ENCODE measurements at regions of chr9 and their contacts with region 1.

Region 1: GRCh38 chr9:129131300-129132145 is 20.3 kb downstream of the PTPA start:
- DNase-seq: no peak
- H3K4me3 ChIP-seq: no peak overlapping the region
- H3K27me3 ChIP-seq: no peaks in the 10 kb centered on the region
- CTCF ChIP-seq: peak; percentile 99

Region 2: GRCh38 chr9:128863647-128864046 is 267.9 kb before region 1 on chr9:
- CTCF ChIA-PET with region 1: no interaction called
- POLR2A ChIA-PET with region 1: no interaction called
- DNase-seq: no peak
- H3K4me3 ChIP-seq: no peak overlapping the region
- H3K27me3 ChIP-seq: no peaks in the 10 kb centered on the region
- CTCF ChIP-seq: peak; percentile 95

Region 3: DNA sequence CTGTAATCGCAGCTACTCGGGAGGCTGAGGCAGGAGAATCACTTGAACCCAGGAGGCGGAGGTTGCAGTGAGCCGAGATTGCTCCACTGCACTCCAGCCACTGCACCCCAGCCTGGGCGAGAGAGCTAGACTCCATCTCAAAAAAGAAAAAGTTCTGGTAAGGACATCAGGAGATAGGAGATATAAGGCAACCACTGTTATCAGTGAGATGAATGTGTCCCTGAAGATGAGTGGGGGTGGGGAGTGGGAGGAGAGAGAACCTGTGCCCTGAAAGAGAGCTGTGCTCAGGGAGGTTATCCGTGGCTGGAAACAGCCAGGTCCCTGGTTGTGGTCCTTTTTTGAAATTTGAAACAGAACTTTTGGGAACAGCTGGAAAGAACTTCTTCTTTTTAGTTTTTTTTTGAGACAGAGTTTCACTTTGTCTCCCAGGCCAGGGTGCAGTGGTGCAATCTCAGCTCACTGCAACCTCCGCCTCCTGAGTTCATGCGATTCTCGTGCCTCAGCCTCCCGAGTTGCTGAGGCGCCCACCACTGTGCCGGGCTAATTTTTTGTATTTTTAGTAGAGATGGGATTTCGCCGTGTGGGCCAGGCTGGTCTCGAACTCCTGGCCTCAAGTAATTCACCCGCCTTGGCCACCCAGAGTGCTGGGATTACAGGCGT is 17.7 kb before region 1 on chr9:
- CTCF ChIA-PET with region 1: interaction called, 33 read pairs
- POLR2A ChIA-PET with region 1: no interaction called
- DNase-seq: no peak
- H3K4me3 ChIP-seq: no peak overlapping the region
- H3K27me3 ChIP-seq: no peaks in the 10 kb centered on the region
- CTCF ChIP-seq: no peak

Region 4: DNA sequence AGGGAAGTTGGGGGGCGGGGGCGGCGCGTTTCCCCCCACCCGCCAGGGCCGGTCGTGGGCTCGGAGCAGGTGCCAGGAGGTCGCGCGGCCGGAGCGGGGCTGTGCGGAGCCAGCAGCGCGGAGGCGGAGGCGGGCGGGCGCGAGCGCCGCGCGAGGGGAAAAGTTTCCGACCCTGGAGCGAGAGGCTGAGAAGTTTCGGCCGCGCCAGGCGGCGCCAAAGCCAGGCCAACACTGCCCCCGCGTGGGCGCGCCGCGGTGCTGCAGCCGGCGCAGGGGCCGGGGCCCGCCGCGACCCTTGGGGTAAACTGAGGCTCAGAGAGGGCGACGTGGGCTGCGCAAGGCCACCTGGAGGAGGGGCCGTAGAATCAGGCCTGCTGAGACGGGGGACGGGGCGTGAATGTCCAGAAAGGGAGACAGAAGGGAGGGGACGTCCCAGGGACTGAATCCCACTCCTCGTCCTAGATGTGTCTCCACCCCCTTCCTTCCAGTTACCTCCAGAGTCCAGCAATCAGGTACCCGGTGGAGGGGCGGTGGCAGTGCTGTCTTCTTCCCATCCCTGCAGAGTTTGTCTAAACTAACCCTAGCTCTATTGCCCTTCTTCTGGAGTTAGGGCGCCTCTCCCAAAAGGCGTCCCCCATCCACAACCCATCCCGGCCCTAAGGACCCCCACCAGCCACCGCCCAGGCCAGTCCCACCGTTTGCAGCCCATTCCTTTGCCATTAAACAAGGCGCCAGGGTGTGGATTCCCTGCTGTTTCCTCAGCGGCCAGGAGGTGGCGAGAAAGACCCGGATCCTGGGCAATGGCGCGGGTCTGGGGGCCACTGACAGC is 479.2 kb after region 1 on chr9:
- CTCF ChIA-PET with region 1: interaction called, 36 read pairs
- POLR2A ChIA-PET with region 1: no interaction called
- DNase-seq: no peak
- H3K4me3 ChIP-seq: peak overlapping the region; percentile 51
- H3K27me3 ChIP-seq: no peaks in the 10 kb centered on the region
- CTCF ChIP-seq: peak; percentile 90

Region 5: GRCh38 chr9:129617167-129617566 is 485.6 kb after region 1 on chr9:
- CTCF ChIA-PET with region 1: interaction called, 258 read pairs
- POLR2A ChIA-PET with region 1: no interaction called
- DNase-seq: no peak
- H3K4me3 ChIP-seq: no peak overlapping the region
- H3K27me3 ChIP-seq: no peaks in the 10 kb centered on the region
- CTCF ChIP-seq: peak; percentile 79

Region 6: GRCh38 chr9:129626079-129626624 is 494.6 kb after region 1 on chr9 and contains the start of gene NTMT1:
- CTCF ChIA-PET with region 1: interaction called, 258 read pairs
- POLR2A ChIA-PET with region 1: interaction called, 4 read pairs
- DNase-seq: no peak
- H3K4me3 ChIP-seq: peak within 1 kb of the TSS; percentile 88
- H3K27me3 ChIP-seq: no peaks in the 10 kb centered on the region
- CTCF ChIP-seq: no peak
- polyA plus RNA-seq, gene NTMT1: 77.1 and 96.3 TPM in 2 replicates